Heart right ventricle (tissue), 16 donors: ENCODE measurements at regions of chr4 and their contacts with region 1.

Region 1: GRCh38 chr4:8861576-8862295 is 9.9 kb downstream of the HMX1 start:
- DNase-seq: no peak
- ATAC-seq: no peak
- H3K4me3 ChIP-seq: peak overlapping the region in 1 of 10 donors; percentile 14
- H3K27ac ChIP-seq: no peak overlapping the region
- H3K4me1 ChIP-seq: peaks cover 0 to 32% (median 17%) of the 10 kb centered on the region in 9 donors
- H3K27me3 ChIP-seq: peaks cover 62 to 100% (median 100%) of the 10 kb centered on the region in 7 donors
- CTCF ChIP-seq: no peak

Region 2: DNA sequence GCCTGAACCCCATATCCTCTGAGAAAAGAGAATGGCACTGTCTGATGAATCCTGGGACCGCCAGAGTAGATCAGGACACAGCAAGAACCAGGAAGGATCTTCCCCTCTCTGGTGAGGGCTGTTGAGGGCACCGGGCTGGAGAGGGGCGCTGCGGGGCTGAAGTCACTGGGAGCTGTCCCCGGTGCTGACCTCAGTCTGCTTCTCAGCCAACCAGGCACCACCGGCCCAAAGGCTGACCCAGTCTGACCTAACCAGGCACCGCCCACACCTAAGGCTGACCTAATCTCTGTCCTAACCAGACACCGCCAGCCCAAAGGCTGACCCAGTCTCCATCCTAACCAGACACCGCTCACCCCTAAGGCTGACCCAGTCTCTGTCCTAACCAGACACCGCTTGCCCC is 186.4 kb before region 1 on chr4:
- intact Hi-C with region 1: no loop called
- DNase-seq: no peak
- ATAC-seq: peak in 3 of 8 donors; percentile 42 to 49 (median 48)
- H3K4me3 ChIP-seq: no peak overlapping the region
- H3K27ac ChIP-seq: no peak overlapping the region
- H3K4me1 ChIP-seq: no peaks in the 10 kb centered on the region
- H3K27me3 ChIP-seq: peaks cover 0 to 53% (median 11%) of the 10 kb centered on the region in 7 donors
- CTCF ChIP-seq: no peak

Region 3: GRCh38 chr4:8877780-8878040 is 16.0 kb after region 1 on chr4:
- intact Hi-C with region 1: loop called in 1 of 10 experiments (anchors 1 kb)
- DNase-seq: no peak
- ATAC-seq: no peak
- H3K4me3 ChIP-seq: no peak overlapping the region
- H3K27ac ChIP-seq: no peak overlapping the region
- H3K4me1 ChIP-seq: peaks cover 0 to 2% (median 0%) of the 10 kb centered on the region in 9 donors
- H3K27me3 ChIP-seq: peaks cover 20 to 95% (median 94%) of the 10 kb centered on the region in 7 donors
- CTCF ChIP-seq: no peak